SK-N-SH (cell line): ENCODE measurements at regions of chr10 and their contacts with region 1.

Region 1: GRCh38 chr10:98045785-98046389 is 15.5 kb upstream of the CRTAC1 start:
- DNase-seq: peak; percentile 72
- H3K4me3 ChIP-seq: no peak overlapping the region; a peak in 1 of 4 replicates
- H3K27ac ChIP-seq: no peak overlapping the region
- H3K4me1 ChIP-seq: peaks cover 0 to 2% of the 10 kb centered on the region in 2 experiments; a peak in 1 of 4 replicates
- H3K27me3 ChIP-seq: peaks cover 5% of the 10 kb centered on the region; the same call in 1 of the 2 replicates
- CTCF ChIP-seq: peak; percentile 91
- EP300 ChIP-seq: no peak
- RAD21 ChIP-seq: peak; percentile 66

Region 2: GRCh38 chr10:97376413-97376812 is 669.5 kb before region 1 on chr10:
- CTCF ChIA-PET with region 1: no interaction called
- POLR2A ChIA-PET with region 1: no interaction called
- DNase-seq: no peak
- H3K4me3 ChIP-seq: no peak overlapping the region
- H3K27ac ChIP-seq: no peak overlapping the region
- H3K4me1 ChIP-seq: no peaks in the 10 kb centered on the region
- H3K27me3 ChIP-seq: no peaks in the 10 kb centered on the region
- CTCF ChIP-seq: no peak
- EP300 ChIP-seq: no peak
- RAD21 ChIP-seq: no peak

Region 3: DNA sequence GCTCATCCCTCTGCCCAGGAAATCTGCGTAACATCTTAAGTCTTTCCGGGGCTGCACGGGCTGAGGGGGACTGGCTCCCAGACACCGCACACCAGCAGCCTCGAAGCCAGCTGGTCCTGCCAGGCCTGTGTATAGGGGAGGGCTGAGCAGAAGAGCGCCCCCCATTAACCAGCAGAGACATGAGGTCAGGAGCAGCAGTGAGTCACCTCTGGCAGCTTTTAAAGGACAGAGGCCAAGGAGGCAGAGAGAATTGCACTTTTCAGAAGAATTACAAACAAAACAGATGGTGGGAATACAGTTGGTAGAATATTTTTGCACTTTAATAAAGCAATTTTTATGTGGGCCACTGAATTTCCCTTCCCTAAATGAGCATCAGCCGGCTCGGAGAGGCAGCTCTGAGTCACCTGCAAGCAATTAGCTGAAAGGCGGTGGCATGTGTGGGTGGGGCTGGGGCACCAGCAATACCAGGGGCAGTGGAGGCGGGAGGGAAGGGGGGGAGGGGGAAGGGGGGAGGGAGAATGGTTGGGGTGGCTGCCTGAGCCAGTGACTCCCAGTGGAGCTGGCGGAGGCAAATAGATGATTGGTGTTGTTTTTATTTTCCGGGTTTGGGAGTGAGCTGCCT is 157.1 kb before region 1 on chr10:
- CTCF ChIA-PET with region 1: interaction called, 11 read pairs
- POLR2A ChIA-PET with region 1: no interaction called
- DNase-seq: peak; percentile 88
- H3K4me3 ChIP-seq: no peak overlapping the region
- H3K27ac ChIP-seq: peak overlapping the region; percentile 35 to 66
- H3K4me1 ChIP-seq: peaks cover 5 to 22% of the 10 kb centered on the region in 2 experiments; a peak in 2 of 4 replicates
- H3K27me3 ChIP-seq: peaks cover 4% of the 10 kb centered on the region; the same call in 1 of the 2 replicates
- CTCF ChIP-seq: peak; percentile 41
- EP300 ChIP-seq: peak in 1 of 2 experiments; percentile 49; a peak in 2 of 4 replicates
- RAD21 ChIP-seq: no peak

Region 4: GRCh38 chr10:97914837-97915211 is 131.1 kb before region 1 on chr10:
- CTCF ChIA-PET with region 1: interaction called, 319 read pairs
- POLR2A ChIA-PET with region 1: no interaction called
- DNase-seq: peak; percentile 92
- H3K4me3 ChIP-seq: peak overlapping the region in 1 of 2 experiments; percentile 50; a peak in 1 of 4 replicates
- H3K27ac ChIP-seq: no peak overlapping the region
- H3K4me1 ChIP-seq: peaks cover 0 to 6% of the 10 kb centered on the region in 2 experiments; a peak in 1 of 4 replicates
- H3K27me3 ChIP-seq: no peaks in the 10 kb centered on the region; the same call in none of the 2 replicates
- CTCF ChIP-seq: peak; percentile 93
- EP300 ChIP-seq: no peak
- RAD21 ChIP-seq: peak; percentile 93

Region 5: DNA sequence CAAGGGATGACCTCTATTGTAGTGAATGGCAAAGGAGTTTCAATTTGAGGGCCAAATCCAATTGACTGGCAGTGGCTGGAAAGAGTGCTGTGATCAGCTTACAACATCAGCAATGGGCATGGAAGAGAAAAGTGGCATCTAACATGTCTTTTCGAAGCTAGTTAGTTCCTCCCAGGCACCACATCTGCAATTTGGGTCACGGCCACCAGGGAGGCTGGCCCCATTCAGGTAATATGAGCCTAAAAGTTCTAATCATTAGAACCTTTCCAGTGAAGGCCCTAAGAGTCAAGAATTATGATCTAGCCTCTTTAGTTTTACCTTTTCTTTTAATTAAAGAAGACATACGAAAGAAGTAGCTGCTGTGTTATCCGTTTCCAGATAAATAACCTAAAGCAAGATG is 32.8 kb before region 1 on chr10:
- CTCF ChIA-PET with region 1: interaction called, 16 read pairs
- POLR2A ChIA-PET with region 1: no interaction called
- DNase-seq: no peak
- H3K4me3 ChIP-seq: no peak overlapping the region
- H3K27ac ChIP-seq: no peak overlapping the region
- H3K4me1 ChIP-seq: no peaks in the 10 kb centered on the region; a peak in 1 of 4 replicates
- H3K27me3 ChIP-seq: no peaks in the 10 kb centered on the region
- CTCF ChIP-seq: no peak
- EP300 ChIP-seq: no peak
- RAD21 ChIP-seq: no peak

Region 6: DNA sequence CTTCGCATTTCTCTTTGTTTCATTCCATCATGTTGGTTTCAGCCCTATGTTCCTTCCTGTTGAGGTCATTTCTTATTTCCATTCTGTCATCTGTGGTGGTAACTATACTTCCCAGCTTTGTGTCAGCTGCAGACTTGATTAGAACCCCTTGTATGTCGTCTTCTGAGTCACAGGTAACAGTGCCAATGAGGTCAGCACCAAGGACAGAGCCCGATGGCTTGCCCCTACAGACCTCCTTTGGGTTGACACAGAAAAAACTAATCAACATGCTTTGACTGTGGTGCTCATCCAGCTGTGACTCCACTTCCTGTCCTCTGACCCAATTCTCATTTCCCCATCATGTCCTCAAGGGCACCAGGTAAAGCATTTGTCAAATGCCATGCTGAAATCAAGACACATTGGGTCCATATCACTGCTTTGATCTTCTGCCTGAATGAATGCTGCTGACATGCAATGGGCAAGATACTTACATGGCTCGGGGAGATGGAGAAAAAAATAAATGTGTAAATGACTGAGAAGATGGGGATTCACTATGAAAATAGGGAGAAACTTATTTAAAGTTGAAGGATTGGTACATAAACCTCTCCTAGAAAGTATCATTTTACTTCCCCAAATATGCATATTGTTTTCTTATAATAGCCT is 10.1 kb after region 1 on chr10:
- CTCF ChIA-PET with region 1: interaction called, 49 read pairs
- POLR2A ChIA-PET with region 1: no interaction called
- DNase-seq: no peak
- H3K4me3 ChIP-seq: no peak overlapping the region
- H3K27ac ChIP-seq: no peak overlapping the region
- H3K4me1 ChIP-seq: no peaks in the 10 kb centered on the region; a peak in 1 of 4 replicates
- H3K27me3 ChIP-seq: no peaks in the 10 kb centered on the region
- CTCF ChIP-seq: no peak
- EP300 ChIP-seq: no peak
- RAD21 ChIP-seq: no peak

Region 7: GRCh38 chr10:98563811-98564210 is 517.9 kb after region 1 on chr10:
- CTCF ChIA-PET with region 1: no interaction called
- POLR2A ChIA-PET with region 1: no interaction called
- DNase-seq: no peak
- H3K4me3 ChIP-seq: no peak overlapping the region
- H3K27ac ChIP-seq: no peak overlapping the region
- H3K4me1 ChIP-seq: no peaks in the 10 kb centered on the region
- H3K27me3 ChIP-seq: peaks cover 2% of the 10 kb centered on the region; the same call in 1 of the 2 replicates
- CTCF ChIP-seq: no peak
- EP300 ChIP-seq: no peak
- RAD21 ChIP-seq: no peak